Common myeloid progenitor, CD34-positive (primary cell): ENCODE measurements at regions of chr2 and their contacts with region 1.

Region 1: DNA sequence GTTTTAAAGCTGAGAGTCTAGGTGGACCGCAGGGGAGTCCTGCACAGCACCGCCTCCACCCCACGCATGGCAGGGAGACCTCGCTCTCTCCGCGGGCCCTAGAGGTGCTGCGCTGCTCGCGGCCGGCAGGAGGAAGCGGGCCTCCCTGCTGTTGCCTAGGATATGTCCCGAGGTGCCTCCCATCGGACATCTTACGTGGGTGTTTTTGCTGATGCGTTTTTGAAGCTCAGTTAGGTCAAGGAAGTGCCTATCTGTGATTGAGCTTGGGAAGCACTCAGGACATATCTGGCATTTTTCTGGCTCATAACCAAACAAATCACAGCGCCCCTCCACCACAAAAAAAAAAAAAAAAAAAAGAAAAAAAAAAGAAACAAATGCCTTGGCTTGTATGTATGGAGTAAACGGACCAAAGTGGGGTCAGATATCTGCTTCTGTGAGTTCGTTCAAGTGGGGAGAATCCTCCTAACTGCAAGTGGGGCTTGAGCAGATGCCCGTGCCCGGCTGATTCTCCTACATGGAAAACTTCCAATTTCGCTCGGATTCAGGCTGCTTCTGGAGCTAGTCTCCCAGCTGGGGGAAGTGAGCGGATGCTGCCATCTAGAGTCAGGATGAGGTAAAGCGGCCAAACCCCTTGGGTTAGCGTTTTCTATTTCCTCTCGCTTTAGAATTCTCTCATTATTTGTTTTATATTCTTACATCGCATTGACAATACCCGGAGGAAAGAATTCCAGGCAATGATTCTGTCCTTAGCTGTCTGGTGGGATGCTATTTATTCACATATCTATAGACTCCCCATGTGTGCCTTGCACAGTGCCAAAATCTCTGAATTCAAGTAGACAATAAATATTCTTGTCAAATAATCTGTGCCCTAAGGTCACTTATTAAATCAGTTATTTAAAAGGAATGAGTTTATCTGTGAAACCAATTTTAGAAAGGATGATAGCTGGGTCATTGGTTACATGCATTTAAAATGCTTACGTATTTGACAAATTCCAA is 95.3 kb downstream of the CD8B2 start:
- DNase-seq: peak; percentile 64 to 77 (median 75)
- H3K4me3 ChIP-seq: peak overlapping the region in 6 of 7 experiments; percentile 35 to 77 (median 54)
- H3K27ac ChIP-seq: no peak overlapping the region
- H3K4me1 ChIP-seq: peaks cover 2 to 22% (median 15%) of the 10 kb centered on the region in 4 experiments
- H3K27me3 ChIP-seq: peaks cover 0 to 17% (median 12%) of the 10 kb centered on the region in 5 experiments

Region 2: GRCh38 chr2:106104332-106105062 is 477.9 kb before region 1 on chr2:
- CTCF ChIA-PET with region 1: interaction called, 10 read pairs
- POLR2A ChIA-PET with region 1: no interaction called
- DNase-seq: peak; percentile 60 to 79 (median 75)
- H3K4me3 ChIP-seq: no peak overlapping the region
- H3K27ac ChIP-seq: no peak overlapping the region
- H3K4me1 ChIP-seq: no peaks in the 10 kb centered on the region
- H3K27me3 ChIP-seq: no peaks in the 10 kb centered on the region

Region 3: GRCh38 chr2:106562268-106563186 is 19.9 kb before region 1 on chr2:
- CTCF ChIA-PET with region 1: interaction called, 109 read pairs
- POLR2A ChIA-PET with region 1: interaction called, 4 read pairs
- DNase-seq: peak in 1 of 3 donors; percentile 32
- H3K4me3 ChIP-seq: no peak overlapping the region
- H3K27ac ChIP-seq: no peak overlapping the region
- H3K4me1 ChIP-seq: peaks cover 8 to 43% (median 15%) of the 10 kb centered on the region in 4 experiments
- H3K27me3 ChIP-seq: no peaks in the 10 kb centered on the region